ENCODE measurements at regions of chr13 and their contacts with region 1.

Region 1: DNA sequence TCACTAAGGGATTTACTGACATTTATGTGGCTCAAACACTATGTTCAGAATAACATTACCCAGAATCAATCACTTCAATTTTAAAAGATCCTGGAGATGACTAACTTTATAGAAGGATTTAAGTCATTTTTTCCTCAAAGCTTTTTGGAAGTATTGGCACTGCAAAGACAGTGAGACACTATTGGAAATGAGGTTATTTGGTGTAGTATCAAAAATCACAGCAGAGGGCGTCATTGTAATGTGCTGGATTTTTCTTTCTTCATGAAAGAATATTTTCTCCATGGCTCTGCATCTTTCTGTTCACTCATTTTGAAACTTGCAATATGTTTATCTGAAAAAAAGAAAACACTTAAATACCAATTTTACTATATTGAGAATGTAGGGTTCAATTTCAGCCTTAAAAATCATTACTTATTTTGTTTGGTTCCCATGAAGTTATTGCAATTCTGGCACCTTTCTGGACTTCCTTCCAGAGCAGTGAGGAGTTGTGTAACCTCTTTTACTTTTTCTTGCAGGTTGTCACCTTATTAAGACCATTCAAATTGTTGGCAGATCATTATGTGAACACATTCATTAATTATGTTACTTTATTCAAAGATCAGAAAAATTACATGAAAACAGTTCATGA is 3.7 kb upstream of the CSNK1A1L start:
- DNase-seq: no peak
- ATAC-seq: no peak
- H3K4me3 Mint-ChIP-seq: no peak overlapping the region
- H3K27ac Mint-ChIP-seq: no peak overlapping the region
- H3K4me1 Mint-ChIP-seq: no peaks in the 10 kb centered on the region
- H3K27me3 Mint-ChIP-seq: peaks cover 6% of the 10 kb centered on the region

Region 2: DNA sequence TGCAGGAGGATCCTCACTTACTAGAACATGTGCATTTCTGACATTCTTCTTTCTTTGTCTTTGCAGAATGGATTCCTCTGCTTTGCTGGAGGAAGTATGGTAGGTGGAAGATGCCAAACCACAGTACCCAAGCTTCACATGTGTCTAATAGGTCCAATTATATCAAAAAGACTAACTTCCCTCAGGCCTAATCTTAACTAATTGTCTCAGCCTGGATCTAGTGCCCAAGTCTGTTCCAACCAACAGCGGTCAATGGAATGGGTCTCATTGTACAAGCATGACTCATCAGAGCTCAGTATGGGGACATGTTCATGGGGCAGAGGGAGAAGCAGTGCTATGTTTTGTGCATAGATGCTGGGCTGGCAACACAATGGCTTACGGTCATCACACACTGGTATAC is 77.9 kb after region 1 on chr13:
- CTCF ChIA-PET with region 1: no interaction called
- POLR2A ChIA-PET with region 1: no interaction called
- intact Hi-C with region 1: no loop called
- DNase-seq: no peak
- ATAC-seq: no peak
- H3K4me3 Mint-ChIP-seq: no peak overlapping the region
- H3K27ac Mint-ChIP-seq: no peak overlapping the region
- H3K4me1 Mint-ChIP-seq: no peaks in the 10 kb centered on the region
- H3K27me3 Mint-ChIP-seq: no peaks in the 10 kb centered on the region

Region 3: DNA sequence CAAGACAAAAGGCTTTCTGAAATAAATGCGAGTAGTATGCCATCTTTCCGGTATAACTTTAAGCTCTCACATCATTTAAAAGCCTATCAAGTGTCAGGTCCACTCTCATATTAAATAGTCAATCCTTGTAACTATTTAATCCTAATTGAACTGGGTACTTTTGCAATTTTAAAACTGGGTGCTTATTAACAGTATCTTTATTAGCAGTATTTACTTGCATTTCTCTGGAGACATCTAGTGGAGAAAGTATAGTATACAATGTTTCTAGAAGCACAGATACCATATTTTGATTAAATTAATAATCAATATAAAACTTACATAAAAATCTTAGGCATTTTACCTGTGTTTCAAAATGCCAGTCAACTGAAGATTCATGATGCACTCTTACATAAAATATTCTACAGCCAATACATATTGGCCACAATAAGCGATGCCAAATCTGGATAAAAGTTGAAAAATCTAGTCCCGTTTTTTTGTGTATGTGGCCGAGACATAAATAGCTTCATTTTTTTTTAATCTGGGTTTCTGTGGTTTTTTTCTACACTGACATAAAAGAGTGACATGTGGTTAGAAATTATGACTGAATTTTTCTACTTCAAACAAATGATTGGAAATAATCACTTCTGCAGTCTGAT is 493.7 kb after region 1 on chr13:
- CTCF ChIA-PET with region 1: no interaction called
- POLR2A ChIA-PET with region 1: no interaction called
- intact Hi-C with region 1: loop called in 1 of 2 experiments (anchors 1 kb)
- DNase-seq: no peak
- ATAC-seq: no peak
- H3K4me3 Mint-ChIP-seq: no peak overlapping the region
- H3K27ac Mint-ChIP-seq: no peak overlapping the region
- H3K4me1 Mint-ChIP-seq: no peaks in the 10 kb centered on the region
- H3K27me3 Mint-ChIP-seq: no peaks in the 10 kb centered on the region

Region 4: DNA sequence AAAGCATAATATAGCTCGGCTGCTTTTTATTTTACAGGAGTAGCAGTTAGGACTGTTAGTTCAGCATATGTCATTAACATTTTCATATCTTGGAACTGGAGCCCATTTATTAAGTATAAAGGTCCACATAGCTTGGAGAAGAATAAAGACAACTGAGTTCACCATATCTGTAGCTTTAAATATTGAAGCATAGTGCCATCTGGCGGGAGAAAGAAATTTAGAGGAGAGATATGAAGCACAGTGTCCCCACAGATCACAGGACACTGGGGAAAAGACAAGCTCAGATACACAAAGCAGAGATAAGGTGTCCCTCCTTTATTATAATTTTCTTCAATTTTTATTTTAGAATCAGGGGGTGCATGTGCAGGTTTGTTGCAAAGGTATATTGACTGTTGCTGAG is 1473.0 kb after region 1 on chr13:
- CTCF ChIA-PET with region 1: no interaction called
- POLR2A ChIA-PET with region 1: no interaction called
- intact Hi-C with region 1: loop called in 1 of 2 experiments (anchors 10 kb)
- DNase-seq: no peak
- ATAC-seq: peak; percentile 39
- H3K4me3 Mint-ChIP-seq: no peak overlapping the region
- H3K27ac Mint-ChIP-seq: no peak overlapping the region
- H3K4me1 Mint-ChIP-seq: no peaks in the 10 kb centered on the region
- H3K27me3 Mint-ChIP-seq: no peaks in the 10 kb centered on the region

Region 5: DNA sequence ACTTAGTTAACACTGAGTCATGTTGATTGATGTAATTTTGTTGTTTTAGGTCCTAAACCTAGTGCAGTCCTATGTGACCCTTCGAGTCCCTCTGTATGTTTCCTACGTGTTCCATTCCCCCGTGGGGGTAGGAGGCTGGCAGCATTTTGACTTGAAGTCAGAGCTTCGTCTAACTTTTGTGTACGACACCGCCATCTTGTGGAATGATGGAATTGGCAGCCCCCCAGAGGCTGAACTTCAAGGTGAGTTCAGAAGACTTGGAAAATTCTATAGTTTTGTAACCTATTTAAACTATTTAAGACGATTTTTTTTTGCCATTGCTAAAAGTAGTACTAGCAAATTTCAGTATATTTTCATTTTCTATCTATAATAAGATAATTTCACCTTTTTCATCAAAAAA is 1763.5 kb after region 1 on chr13:
- CTCF ChIA-PET with region 1: no interaction called
- POLR2A ChIA-PET with region 1: no interaction called
- intact Hi-C with region 1: loop called in 1 of 2 experiments (anchors 2 kb)
- DNase-seq: peak; percentile 68
- ATAC-seq: peak; percentile 33
- H3K4me3 Mint-ChIP-seq: no peak overlapping the region
- H3K27ac Mint-ChIP-seq: no peak overlapping the region
- H3K4me1 Mint-ChIP-seq: no peaks in the 10 kb centered on the region
- H3K27me3 Mint-ChIP-seq: peaks cover 17% of the 10 kb centered on the region

Measured in activated CD4-positive, alpha-beta T cell treated with anti-CD3 and anti-CD28 coated beads for 36 hours (primary cell).